ENCODE measurements at regions of chr6 and their contacts with region 1.

Region 1: GRCh38 chr6:7378740-7379139 is 10.8 kb downstream of the CAGE1 start:
- DNase-seq: no peak
- H3K4me3 ChIP-seq: no peak overlapping the region
- H3K27ac ChIP-seq: no peak overlapping the region
- H3K4me1 ChIP-seq: no peaks in the 10 kb centered on the region
- H3K27me3 ChIP-seq: peaks cover 0 to 8% of the 10 kb centered on the region in 2 experiments
- CTCF ChIP-seq: no peak
- POLR2A ChIP-seq: no peak

Region 2: GRCh38 chr6:7324520-7324919 is 54.2 kb before region 1 on chr6:
- CTCF ChIA-PET with region 1: no interaction called
- POLR2A ChIA-PET with region 1: no interaction called
- dilution Hi-C with region 1: no loop called
- intact Hi-C with region 1: loop called (anchors 2 kb)
- DNase-seq: no peak
- H3K4me3 ChIP-seq: no peak overlapping the region
- H3K27ac ChIP-seq: no peak overlapping the region
- H3K4me1 ChIP-seq: no peaks in the 10 kb centered on the region
- H3K27me3 ChIP-seq: peaks cover 0 to 2% of the 10 kb centered on the region in 2 experiments
- CTCF ChIP-seq: no peak
- POLR2A ChIP-seq: no peak

Measured in endothelial cell of umbilical vein (primary cell).